ENCODE measurements at regions of chr3 and their contacts with region 1.

Region 1: DNA sequence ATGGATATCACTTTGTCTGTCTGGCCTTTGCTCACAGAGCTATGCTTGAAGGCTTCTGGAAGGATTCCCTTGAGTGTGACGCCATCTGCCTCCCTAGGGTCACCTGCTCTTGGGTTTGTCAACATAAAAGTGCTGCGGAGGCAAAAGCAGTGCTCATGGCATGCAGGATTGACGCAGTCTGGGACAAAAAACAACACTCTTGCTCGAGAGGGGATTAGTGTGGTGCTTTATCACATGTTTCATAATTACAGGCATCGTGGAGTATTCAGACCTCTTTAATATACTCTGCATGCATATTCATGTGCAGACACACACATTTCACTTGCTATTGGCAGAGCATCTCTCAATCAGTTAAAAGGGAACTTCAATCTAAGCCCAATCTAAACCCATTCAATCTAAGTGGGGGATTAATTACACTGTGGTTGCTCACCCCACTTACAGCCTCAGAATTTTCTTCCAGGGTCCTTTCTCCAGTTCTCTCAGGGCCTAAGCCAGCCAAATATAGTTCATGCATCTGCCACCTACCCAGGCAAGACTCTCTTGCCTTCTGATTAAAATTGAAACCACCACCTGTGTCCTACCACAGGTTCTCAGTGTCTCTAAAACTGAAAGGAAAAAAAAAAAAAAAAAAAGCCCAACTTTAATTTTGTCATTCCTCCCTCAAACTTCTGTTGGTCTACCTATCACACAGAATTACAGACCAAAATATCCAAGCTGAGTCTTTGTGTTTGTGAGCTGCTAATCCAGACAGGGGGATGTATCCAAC is 75.6 kb downstream of the BFSP2 start:
- DNase-seq: peak; percentile 38
- H3K4me3 Mint-ChIP-seq: no peak overlapping the region
- H3K27ac Mint-ChIP-seq: peak overlapping the region; percentile 57
- H3K4me1 Mint-ChIP-seq: peaks cover 38% of the 10 kb centered on the region
- H3K27me3 Mint-ChIP-seq: no peaks in the 10 kb centered on the region

Region 2: DNA sequence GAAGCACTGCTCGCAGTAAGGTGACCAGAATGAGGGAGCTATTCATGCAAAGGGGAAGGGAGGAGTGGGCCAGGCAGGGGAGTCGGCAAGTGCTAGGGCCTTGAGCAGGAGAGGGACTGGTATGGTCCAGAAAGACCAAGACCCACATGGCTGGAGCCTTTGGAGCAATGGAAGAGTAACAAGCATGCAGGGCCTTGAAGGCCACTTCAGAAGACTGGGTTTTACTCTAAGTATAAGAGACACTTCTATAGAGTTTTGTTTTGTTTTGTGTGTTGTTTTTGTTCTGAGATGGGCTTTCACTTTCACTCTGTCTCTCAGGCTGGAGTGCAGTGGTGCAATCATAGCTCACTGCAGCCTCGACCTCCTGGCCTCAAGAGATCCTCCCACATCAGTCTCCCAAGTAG is 33.6 kb before region 1 on chr3:
- CTCF ChIA-PET with region 1: interaction called, 4 read pairs
- POLR2A ChIA-PET with region 1: no interaction called
- intact Hi-C with region 1: loop called (anchors 1 kb)
- DNase-seq: peak; percentile 43
- H3K4me3 Mint-ChIP-seq: peak overlapping the region; percentile 48
- H3K27ac Mint-ChIP-seq: peak overlapping the region; percentile 47
- H3K4me1 Mint-ChIP-seq: peaks cover 35% of the 10 kb centered on the region
- H3K27me3 Mint-ChIP-seq: no peaks in the 10 kb centered on the region

Region 3: DNA sequence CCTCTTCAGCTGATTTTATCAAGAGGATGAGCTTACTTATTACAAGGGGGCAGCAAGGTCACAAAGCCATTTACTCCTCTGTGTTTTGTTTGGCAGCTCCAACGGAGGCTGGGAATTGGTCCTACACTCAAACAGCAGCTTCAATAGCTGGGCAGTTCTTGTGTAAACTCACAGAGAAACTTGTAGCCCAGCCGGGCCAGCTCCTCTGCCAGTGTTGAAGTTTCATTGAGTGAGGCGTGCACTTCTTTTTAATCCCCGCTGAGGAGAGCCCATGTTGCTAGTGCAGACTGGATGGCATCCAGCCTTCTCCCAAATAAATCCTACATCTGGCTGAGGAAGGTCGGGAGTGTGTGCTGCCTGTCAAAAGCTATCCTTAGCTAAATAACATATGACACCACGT is 16.0 kb before region 1 on chr3:
- CTCF ChIA-PET with region 1: interaction called, 4 read pairs
- POLR2A ChIA-PET with region 1: no interaction called
- intact Hi-C with region 1: loop called (anchors 2 kb)
- DNase-seq: no peak
- H3K4me3 Mint-ChIP-seq: no peak overlapping the region
- H3K27ac Mint-ChIP-seq: no peak overlapping the region
- H3K4me1 Mint-ChIP-seq: peaks cover 16% of the 10 kb centered on the region
- H3K27me3 Mint-ChIP-seq: no peaks in the 10 kb centered on the region